ENCODE measurements at regions of chr3 and their contacts with region 1.

Region 1: DNA sequence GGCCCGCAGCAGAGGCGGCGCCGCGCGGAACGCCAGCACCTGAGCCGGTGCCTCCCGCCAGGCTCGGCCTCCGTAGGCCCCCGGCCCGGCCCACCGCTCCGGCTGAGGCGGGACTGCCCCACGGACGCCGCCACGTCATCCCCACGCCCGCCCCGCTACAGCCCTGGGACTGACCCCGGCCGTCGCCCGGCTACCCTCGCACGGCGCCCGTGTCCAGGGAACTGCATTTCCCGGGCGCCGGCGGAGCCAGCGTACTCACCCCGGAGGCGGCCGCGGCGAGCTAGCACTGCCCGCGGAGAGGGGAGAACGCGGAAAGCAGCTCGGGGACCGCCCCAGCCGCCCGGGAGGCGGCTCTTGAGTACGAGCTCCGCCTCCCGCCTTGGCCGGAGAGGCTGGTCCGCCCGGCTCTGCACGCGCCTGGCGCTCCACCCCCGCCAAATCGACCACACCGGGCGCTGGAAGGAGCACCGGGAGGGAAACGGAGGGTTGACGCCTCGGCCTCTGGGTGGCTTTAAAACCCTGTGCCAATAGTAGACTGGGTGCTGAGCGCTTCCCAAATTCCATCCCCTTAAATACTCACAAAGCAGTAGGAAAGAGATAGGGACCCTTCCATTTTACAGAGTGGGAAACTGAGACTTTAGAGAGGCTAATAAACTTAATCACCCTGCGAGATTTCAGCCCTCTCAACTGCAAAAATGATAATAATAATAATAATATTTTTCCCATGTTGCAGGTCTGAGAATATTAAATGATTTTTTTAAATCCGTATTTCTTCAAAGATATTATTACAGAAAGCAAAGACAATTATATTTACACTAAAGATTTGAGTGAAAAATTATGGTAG is at the start of gene B4GALT4:
- DNase-seq: peak; percentile 84
- ATAC-seq: peak; percentile 96
- H3K4me3 ChIP-seq: peak within 1 kb of the TSS; percentile 82
- H3K27ac ChIP-seq: peak within 1 kb of the TSS; percentile 84
- H3K4me1 ChIP-seq: peaks cover 2% of the 10 kb centered on the region; the same call in 1 of the 2 replicates
- H3K27me3 ChIP-seq: no peaks in the 10 kb centered on the region
- CTCF ChIP-seq: no peak
- POLR2A ChIP-seq: peak; percentile 95
- RAD21 ChIP-seq: no peak
- total RNA-seq, gene B4GALT4: 30.3 and 30.6 TPM in 2 replicates

Region 2: GRCh38 chr3:118927449-118927848 is 313.4 kb before region 1 on chr3:
- CTCF ChIA-PET with region 1: no interaction called
- POLR2A ChIA-PET with region 1: no interaction called
- dilution Hi-C with region 1: no loop called
- in situ Hi-C with region 1: no loop called
- intact Hi-C with region 1: no loop called
- DNase-seq: no peak
- ATAC-seq: no peak
- H3K4me3 ChIP-seq: no peak overlapping the region
- H3K27ac ChIP-seq: no peak overlapping the region
- H3K4me1 ChIP-seq: no peaks in the 10 kb centered on the region
- H3K27me3 ChIP-seq: no peaks in the 10 kb centered on the region
- CTCF ChIP-seq: no peak
- POLR2A ChIP-seq: no peak
- RAD21 ChIP-seq: no peak

Region 3: DNA sequence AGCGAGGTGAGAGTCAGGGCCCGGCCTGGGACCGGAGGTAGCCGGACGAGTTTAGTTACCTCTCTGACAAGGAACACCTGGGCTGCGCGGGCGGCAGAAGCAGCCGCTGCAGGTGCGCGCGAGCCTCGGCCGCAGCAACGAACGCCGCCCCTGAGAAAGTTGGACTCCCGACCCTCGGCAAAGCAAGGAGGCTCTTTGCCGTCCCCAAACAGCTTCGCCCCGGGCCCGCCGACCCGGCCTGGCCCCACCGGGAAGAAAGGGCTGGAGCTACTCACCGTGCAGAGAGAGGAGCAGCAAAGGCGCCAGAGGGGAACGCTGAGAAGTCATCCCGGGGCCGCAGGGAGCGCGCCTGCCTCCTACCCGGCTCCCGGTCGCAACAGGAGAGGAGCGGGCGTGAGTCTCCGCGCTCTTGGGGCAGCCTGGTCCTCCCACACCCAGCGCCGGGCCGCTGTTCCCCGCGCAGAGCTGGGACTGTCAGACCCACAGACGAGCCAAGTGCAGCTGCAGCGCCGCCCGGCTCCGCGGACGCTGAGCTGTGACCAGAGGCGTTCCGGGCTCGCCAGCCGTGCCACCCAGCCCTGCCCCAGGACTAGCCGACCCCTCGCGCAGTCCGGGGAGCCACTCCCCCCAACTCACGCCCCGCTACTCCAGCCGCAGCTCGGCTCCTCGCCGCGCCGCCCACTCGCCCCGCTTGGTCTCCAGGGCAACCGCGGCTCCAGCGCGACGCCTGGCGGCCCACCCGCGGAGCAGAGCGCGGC is 206.4 kb before region 1 on chr3 and contains the start of gene IGSF11:
- CTCF ChIA-PET with region 1: no interaction called
- POLR2A ChIA-PET with region 1: no interaction called
- dilution Hi-C with region 1: no loop called
- in situ Hi-C with region 1: no loop called
- intact Hi-C with region 1: loop called (anchors 10 kb)
- DNase-seq: peak; percentile 20
- ATAC-seq: peak; percentile 96
- H3K4me3 ChIP-seq: peak within 1 kb of the TSS; percentile 65
- H3K27ac ChIP-seq: no peak within 1 kb of the TSS
- H3K4me1 ChIP-seq: no peaks in the 10 kb centered on the region
- H3K27me3 ChIP-seq: peaks cover 17% of the 10 kb centered on the region
- CTCF ChIP-seq: peak; percentile 54
- POLR2A ChIP-seq: no peak
- RAD21 ChIP-seq: peak; percentile 8; the same call in 1 of the 2 replicates
- total RNA-seq, gene IGSF11: 0.18 TPM in 1 of 2 replicates, not detected in the other

Region 4: DNA sequence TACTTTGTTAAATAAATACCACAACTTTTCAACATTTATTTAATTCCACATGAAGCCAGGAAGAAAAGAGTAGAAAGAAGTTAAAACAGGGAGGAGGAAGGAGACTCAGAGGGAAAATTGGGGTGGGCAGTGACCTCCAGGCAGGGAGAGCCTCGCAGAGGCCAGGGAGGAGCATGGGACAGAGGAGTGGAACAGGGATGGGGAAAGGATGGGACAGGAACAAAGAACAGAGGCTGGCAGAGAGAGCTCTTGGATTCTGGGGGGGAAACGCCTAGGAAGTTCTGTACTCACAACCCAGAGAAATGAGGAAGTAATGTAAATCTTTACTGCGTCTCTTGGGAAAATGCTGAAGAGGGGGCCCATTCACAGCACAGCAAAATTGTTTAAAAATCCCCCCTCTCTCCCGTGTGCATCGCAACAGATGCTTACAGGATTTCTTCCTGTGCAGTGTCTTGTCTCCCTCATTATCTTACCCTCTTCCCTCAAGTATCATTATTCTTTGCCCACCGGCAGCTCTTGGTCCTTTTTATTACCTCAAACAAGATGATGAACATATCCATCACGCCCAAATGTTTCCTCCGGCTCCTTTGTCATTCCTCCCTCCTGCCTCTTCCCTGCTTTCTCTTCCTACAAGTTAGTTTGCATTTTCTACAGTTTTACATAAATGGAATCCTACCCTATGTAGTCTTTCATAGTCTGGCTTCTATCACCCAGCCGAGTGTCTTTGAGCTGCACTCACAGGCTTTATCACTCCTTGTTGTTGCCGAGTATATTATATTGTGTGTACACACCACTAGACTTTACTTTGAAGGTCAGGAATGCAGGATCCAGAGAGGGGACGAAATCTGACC is 118.9 kb after region 1 on chr3:
- CTCF ChIA-PET with region 1: no interaction called
- POLR2A ChIA-PET with region 1: no interaction called
- dilution Hi-C with region 1: no loop called
- in situ Hi-C with region 1: no loop called
- intact Hi-C with region 1: no loop called
- DNase-seq: no peak
- ATAC-seq: no peak; the same call in 1 of the 2 replicates
- H3K4me3 ChIP-seq: no peak overlapping the region
- H3K27ac ChIP-seq: no peak overlapping the region
- H3K4me1 ChIP-seq: peaks cover 5% of the 10 kb centered on the region
- H3K27me3 ChIP-seq: no peaks in the 10 kb centered on the region
- CTCF ChIP-seq: no peak
- POLR2A ChIP-seq: no peak
- RAD21 ChIP-seq: no peak